GM10248 (cell line): ENCODE measurements at regions of chr6 and their contacts with region 1.

Region 1: DNA sequence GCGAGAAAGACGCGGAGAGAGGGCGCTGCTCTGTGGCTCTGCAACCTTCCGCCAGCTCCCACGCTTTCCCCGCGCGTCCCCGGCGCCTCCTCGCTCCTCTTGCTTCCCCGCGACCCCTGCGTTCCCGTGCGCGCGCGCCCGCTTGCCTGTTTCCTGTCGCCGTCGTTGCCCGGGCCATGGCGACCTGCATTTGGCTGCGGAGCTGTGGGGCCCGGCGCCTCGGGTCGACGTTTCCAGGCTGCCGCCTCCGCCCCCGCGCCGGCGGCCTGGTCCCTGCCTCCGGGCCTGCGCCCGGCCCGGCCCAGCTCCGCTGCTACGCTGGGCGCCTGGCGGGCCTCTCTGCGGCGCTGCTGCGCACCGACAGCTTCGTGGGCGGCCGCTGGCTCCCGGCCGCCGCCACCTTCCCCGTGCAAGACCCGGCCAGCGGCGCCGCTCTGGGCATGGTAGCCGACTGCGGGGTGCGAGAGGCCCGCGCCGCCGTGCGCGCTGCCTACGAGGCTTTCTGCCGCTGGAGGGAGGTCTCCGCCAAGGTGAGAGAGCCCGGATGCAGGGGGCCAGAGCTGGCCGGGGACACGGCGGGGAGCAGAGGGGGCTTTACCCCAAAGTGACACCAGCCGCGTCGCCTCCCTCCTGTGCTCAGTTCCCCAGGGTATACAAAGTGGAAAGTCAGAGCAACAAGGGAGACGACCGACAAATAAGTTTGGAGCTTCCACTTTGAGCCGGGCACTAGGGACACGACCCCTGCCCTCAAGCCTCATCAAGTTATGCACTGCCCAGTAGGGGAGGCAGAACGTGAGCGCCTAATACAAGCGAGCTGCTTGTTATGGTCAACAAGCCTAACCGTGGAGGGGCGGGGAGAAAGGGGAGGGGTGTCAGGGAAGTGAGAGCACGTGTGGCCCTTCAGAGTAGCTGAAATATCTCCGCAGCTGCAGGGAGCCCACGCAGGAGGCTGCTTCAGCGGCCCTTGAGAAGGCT is at the start of gene ALDH5A1:
- DNase-seq: peak; percentile 82
- CTCF ChIP-seq: peak; percentile 53

Region 2: GRCh38 chr6:24478903-24479302 is 16.2 kb before region 1 on chr6:
- CTCF ChIA-PET with region 1: interaction called, 18 read pairs
- POLR2A ChIA-PET with region 1: interaction called, 3 read pairs
- DNase-seq: no peak
- CTCF ChIP-seq: no peak

Region 3: GRCh38 chr6:24484657-24485323 is 10.3 kb before region 1 on chr6:
- CTCF ChIA-PET with region 1: interaction called, 18 read pairs
- POLR2A ChIA-PET with region 1: no interaction called
- DNase-seq: no peak
- CTCF ChIP-seq: no peak

Region 4: DNA sequence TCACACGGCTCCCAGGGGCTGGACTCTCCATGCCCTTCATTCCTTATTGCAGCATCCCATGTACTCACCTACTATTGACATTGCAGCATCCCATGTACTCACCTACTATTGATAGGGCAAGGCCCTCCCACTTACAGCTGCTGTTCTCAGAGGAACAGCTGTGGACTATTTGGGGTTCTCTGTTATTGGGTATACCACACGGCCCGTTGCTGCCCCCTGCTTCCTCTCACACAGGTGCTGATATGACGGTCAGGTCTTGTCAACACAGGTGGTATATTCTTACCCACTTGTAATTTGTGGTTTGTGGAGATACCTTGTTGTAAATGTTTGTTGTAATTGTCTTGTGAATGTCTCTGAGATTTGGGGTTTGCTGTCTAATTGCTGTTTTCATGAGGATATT is 18.5 kb after region 1 on chr6:
- CTCF ChIA-PET with region 1: interaction called, 40 read pairs
- POLR2A ChIA-PET with region 1: interaction called, 5 read pairs
- DNase-seq: no peak
- CTCF ChIP-seq: peak; percentile 0

Region 5: DNA sequence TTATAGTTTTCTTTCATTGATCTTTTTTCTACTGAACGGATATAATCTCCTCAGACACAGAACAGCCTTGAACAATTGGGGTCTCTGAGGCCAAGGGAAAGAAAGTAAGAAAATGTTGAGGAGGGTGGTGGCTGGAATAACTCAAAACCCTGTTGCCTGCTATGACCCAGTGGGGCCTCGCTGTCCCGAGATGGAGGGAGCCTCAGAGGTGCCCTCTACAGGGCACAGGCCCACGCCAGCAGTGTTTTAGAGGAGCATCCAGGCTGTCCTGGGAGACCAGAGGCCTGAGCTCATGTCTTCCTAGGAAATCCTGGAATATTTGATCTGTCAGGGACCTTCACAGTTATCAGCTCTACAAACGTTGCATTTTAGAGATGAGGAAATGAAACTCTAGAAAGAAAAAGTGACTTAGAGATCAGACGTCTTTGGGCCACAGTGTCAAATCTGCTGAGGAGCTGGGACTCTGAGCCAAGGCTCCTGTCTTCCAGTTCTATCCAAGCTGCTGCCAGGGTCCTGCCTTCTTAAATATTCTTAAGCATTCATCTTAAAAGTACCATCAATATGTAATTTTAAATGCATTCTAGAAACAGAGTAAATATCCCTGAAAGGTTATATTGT is 25.9 kb after region 1 on chr6:
- CTCF ChIA-PET with region 1: interaction called, 127 read pairs
- POLR2A ChIA-PET with region 1: interaction called, 5 read pairs
- DNase-seq: peak; percentile 59
- CTCF ChIP-seq: peak; percentile 76

Region 6: DNA sequence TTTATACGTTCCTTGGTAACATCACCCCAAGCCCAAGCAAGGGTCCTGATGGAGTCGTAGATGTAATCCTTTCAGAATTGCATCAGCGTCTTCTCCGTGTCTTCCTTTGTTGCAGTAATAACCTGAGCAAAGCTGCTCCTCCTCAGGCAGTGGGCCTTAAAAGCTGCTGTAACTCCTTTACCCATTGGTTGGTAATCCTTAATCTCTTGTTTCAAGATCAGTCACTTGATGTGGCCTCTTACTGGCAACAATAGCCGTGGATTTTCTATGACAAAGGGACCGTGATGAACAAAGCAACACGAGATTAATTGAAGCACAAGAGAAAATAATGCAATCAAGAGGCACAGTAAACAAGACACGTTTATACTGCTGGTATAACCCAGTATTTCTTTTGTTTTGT is 44.3 kb after region 1 on chr6:
- CTCF ChIA-PET with region 1: no interaction called
- POLR2A ChIA-PET with region 1: no interaction called
- DNase-seq: no peak
- CTCF ChIP-seq: no peak

Region 7: GRCh38 chr6:24600903-24601302 is 105.8 kb after region 1 on chr6:
- CTCF ChIA-PET with region 1: no interaction called
- POLR2A ChIA-PET with region 1: no interaction called
- DNase-seq: no peak
- CTCF ChIP-seq: peak; percentile 9

Region 8: GRCh38 chr6:24631671-24632070 is 136.6 kb after region 1 on chr6:
- CTCF ChIA-PET with region 1: no interaction called
- POLR2A ChIA-PET with region 1: no interaction called
- DNase-seq: no peak
- CTCF ChIP-seq: no peak